ENCODE measurements at regions of chrX and their contacts with region 1.

Region 1: GRCh38 chrX:54639346-54640102 is 109.5 kb downstream of the GNL3L start:
- H3K4me3 Mint-ChIP-seq: peak overlapping the region; percentile 86
- H3K27ac Mint-ChIP-seq: peak overlapping the region; percentile 98
- H3K4me1 Mint-ChIP-seq: no peaks in the 10 kb centered on the region
- H3K27me3 Mint-ChIP-seq: no peaks in the 10 kb centered on the region

Region 2: DNA sequence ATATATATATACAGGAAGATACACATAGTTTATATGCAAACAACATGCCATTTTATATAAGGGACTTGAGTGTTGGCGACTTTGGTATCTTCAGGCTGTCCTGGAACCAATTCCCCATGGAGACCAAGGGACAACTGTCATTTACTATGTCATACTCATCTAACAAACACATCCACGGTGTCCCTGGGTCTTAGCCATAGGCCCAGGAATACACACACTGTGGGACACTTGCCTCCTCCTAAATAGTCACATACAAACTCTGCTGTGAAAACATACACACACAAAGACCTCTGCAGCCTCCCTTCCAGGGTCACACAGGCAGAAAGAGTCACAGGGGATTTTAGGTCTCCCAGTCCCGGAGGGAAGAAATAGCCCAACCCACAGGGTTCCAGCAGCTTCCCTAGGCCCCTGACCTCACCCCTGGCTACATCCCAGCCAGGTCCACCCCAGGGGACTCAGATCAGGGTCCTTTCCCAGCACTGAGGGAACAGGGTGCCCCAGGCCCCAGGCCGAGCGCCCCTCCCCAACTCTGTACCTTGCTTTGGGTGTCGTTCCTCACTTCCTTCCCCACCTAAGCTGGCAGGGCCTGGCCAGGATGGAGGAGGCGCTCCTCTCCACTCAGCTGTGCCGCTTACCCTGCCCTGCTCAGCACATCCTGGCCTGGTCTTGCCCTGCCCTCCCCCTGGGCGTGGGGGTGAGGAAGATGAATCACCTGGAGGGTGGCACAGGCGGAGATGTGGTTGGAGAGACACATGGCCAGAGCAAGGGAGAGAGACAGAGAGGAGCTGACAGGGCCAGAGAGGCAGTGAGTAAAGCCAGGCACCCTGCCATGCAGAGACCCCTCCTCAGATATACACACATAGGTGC is 165.3 kb before region 1 on chrX:
- intact Hi-C with region 1: no loop called
- H3K4me3 Mint-ChIP-seq: no peak overlapping the region
- H3K27ac Mint-ChIP-seq: no peak overlapping the region
- H3K4me1 Mint-ChIP-seq: no peaks in the 10 kb centered on the region
- H3K27me3 Mint-ChIP-seq: no peaks in the 10 kb centered on the region

Region 3: DNA sequence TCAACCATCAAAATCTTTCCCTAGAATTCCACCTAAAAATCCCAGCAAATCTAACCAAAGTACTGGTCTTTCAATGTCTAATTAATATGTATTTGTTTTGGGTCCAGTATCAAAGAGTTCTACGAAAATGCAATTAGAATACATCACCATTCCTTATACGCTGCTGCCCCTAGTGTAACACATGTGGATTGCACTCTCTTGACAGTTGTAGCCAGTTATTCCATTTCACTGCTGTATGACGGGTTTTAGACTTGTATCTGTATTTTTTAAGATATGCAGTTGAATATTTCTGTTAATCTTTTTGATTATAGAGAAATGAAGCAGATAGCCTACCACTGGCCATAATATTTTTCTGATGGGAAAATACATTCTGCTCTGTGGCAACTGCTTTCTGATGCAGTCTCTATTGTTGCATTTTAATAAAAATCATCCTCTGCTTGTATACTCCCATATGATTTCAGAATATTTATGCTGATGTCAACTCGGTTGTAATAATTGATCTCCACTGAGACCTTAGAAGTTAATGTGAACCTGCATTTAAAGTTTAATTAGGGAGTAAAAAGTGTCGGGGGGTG is 418.2 kb after region 1 on chrX:
- intact Hi-C with region 1: loop called (anchors 2 kb)
- H3K4me3 Mint-ChIP-seq: no peak overlapping the region
- H3K27ac Mint-ChIP-seq: no peak overlapping the region
- H3K4me1 Mint-ChIP-seq: peaks cover 5% of the 10 kb centered on the region
- H3K27me3 Mint-ChIP-seq: peaks cover 8% of the 10 kb centered on the region

Measured in dendritic cell treated with granulocyte-macrophage colony-stimulating factor and Interleukin-4, amounts not matched to agents 40 ng/mL and 50 ng/mL, for 4 days (primary cell).